ENCODE measurements at regions of chr7 and their contacts with region 1.

Region 1: GRCh38 chr7:4830176-4830575 is 31.7 kb downstream of the PAPOLB start:
- DNase-seq: peak; percentile 88
- ATAC-seq: peak; percentile 98
- H3K4me3 Mint-ChIP-seq: no peak overlapping the region
- H3K27ac Mint-ChIP-seq: peak overlapping the region; percentile 87
- H3K4me1 Mint-ChIP-seq: peaks cover 2% of the 10 kb centered on the region
- H3K27me3 Mint-ChIP-seq: no peaks in the 10 kb centered on the region
- CTCF ChIP-seq: peak; percentile 66; the same call in 1 of the 2 replicates

Region 2: GRCh38 chr7:4797858-4798705 is 32.1 kb before region 1 on chr7:
- CTCF ChIA-PET with region 1: interaction called, 17 read pairs
- POLR2A ChIA-PET with region 1: no interaction called
- DNase-seq: peak; percentile 83
- ATAC-seq: peak; percentile 92
- H3K4me3 Mint-ChIP-seq: no peak overlapping the region
- H3K27ac Mint-ChIP-seq: no peak overlapping the region
- H3K4me1 Mint-ChIP-seq: peaks cover 5% of the 10 kb centered on the region
- H3K27me3 Mint-ChIP-seq: no peaks in the 10 kb centered on the region
- CTCF ChIP-seq: peak; percentile 81

Region 3: DNA sequence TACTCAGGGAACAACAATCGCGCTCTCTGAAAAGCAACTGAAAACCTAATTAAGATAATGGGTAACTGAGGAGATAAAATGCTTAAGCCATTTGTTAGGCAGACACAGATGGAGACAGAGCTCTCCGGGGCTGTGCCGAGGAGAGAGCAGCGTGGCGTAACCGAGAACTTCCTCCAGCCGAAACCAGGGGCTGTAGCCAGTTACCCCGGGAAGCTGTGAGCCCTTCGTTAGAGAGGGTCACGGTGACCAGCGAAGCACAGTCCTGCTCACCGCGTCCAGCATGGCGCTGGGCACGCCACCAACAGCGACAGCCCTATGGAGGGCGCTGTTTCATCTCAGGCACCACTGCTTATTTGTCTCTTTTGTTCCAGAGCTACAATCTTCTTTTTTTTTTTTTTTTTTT is 15.6 kb after region 1 on chr7:
- CTCF ChIA-PET with region 1: interaction called, 19 read pairs
- POLR2A ChIA-PET with region 1: no interaction called
- DNase-seq: peak; percentile 79
- ATAC-seq: peak; percentile 96
- H3K4me3 Mint-ChIP-seq: no peak overlapping the region
- H3K27ac Mint-ChIP-seq: peak overlapping the region; percentile 49; the same call in 1 of the 2 replicates
- H3K4me1 Mint-ChIP-seq: peaks cover 7% of the 10 kb centered on the region
- H3K27me3 Mint-ChIP-seq: no peaks in the 10 kb centered on the region
- CTCF ChIP-seq: peak; percentile 43; the same call in 1 of the 2 replicates

Region 4: DNA sequence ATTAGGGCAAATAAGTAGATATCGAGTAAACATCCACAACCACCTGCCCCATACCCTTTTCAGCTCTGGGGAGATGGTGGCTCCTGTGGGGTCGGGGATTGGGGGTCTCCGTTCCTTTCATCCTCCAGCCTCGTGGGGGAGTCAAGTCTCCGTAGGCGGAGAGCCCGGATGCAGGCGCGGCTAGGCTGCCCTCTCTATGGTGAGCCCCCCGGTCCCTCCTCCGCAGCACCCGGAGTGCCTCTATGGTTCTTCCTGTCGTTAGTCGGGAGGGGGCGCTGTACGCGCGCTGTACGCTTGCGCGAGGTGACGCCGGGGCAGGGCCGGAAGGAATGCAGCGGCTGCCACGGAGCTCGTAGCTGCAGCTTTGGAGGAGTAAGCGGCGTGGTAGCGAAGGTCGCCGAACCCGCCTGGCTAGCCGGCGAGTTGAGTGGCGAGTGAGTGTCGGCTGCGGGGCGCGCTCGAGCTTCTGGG is 143.6 kb after region 1 on chr7:
- CTCF ChIA-PET with region 1: interaction called, 11 read pairs
- POLR2A ChIA-PET with region 1: no interaction called
- DNase-seq: peak; percentile 95
- ATAC-seq: peak; percentile 98
- H3K4me3 Mint-ChIP-seq: peak overlapping the region; percentile 93
- H3K27ac Mint-ChIP-seq: peak overlapping the region; percentile 94
- H3K4me1 Mint-ChIP-seq: no peaks in the 10 kb centered on the region
- H3K27me3 Mint-ChIP-seq: no peaks in the 10 kb centered on the region; the same call in 1 of the 2 replicates
- CTCF ChIP-seq: peak; percentile 81; the same call in 1 of the 2 replicates

Region 5: DNA sequence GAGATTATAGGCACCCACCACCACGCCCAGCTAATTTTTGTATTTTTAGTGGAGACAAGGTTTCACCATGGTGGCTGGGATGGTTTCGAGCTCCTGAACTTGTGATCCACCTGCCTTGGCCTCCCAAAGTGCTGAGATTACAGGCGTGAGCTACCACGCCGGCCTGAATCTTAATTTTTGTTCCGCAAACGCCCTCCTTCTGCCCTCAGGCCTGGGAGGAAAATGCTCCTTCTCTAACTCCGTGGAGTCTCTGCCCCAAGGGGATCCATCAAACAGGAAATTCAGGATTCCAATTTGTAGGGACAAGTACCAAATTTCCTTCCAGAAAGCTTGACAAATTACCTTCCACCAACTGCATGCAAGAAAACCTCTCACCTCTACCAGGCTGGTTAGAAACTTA is 258.7 kb after region 1 on chr7:
- CTCF ChIA-PET with region 1: interaction called, 28 read pairs
- POLR2A ChIA-PET with region 1: no interaction called
- DNase-seq: no peak
- ATAC-seq: no peak
- H3K4me3 Mint-ChIP-seq: peak overlapping the region; percentile 6; the same call in 1 of the 2 replicates
- H3K27ac Mint-ChIP-seq: peak overlapping the region; percentile 23; the same call in 1 of the 2 replicates
- H3K4me1 Mint-ChIP-seq: peaks cover 6% of the 10 kb centered on the region; the same call in 1 of the 2 replicates
- H3K27me3 Mint-ChIP-seq: peaks cover 25% of the 10 kb centered on the region
- CTCF ChIP-seq: no peak

Measured in WTC11 (cell line).